Activated T-helper 1 cell treated with anti-CD3 and anti-CD28 coated beads, Interleukin-12 subunit alpha, Interleukin-12 subunit beta, Interleukin-2, Interleukin-4 antibody, amounts not matched to agents 30 ng/mL and 10 ng/mL and 1 ng/mL, durations not matched to agents 14 hours and 24 hours and 36 hours (primary cell): ENCODE measurements at regions of chr1 and their contacts with region 1.

Region 1: DNA sequence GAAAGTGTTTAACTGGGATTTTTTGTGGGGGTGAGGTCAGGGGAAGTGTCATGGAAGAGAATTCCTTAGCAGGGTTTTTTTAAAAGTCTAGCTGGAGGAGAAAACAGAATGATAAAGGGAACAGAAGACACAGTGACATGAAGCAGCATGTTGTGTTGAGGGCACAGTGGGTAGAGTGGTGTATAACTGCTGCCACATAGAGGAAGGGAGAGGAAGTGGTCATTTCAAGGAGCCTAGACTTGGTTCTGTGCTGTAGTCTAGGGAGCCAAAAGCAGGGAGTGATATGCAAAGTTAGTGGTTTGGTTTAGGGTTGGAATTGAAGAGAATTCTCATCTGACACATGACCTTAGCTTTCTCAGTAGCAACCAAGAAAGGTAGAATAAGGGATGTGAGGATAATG is 10.2 kb downstream of the EEIG2 start:
- DNase-seq: no peak
- H3K4me3 Mint-ChIP-seq: no peak overlapping the region
- H3K27ac Mint-ChIP-seq: no peak overlapping the region
- H3K4me1 Mint-ChIP-seq: peaks cover under 1% of the 10 kb centered on the region
- H3K27me3 Mint-ChIP-seq: no peaks in the 10 kb centered on the region

Region 2: DNA sequence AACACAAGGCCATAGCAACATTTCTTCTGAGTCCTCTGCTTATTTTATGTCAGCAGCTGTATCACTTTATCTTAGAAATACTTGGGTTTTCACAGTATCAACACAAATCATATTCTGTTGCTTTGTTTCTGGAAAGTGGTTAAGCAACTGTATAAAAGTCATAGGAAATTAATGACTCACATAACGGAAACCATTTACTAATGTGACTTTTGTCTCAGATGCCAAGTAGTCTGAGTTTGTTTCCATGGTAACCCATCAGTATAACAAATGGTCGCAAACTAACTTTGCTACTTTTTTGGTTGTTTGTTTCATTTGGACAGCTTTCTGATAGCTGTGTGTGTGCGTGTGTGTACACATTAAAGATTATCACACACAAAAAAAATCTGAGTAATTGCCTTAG is 20.8 kb after region 1 on chr1:
- intact Hi-C with region 1: loop called (anchors 2 kb)
- DNase-seq: no peak
- H3K4me3 Mint-ChIP-seq: no peak overlapping the region
- H3K27ac Mint-ChIP-seq: peak overlapping the region; percentile 75
- H3K4me1 Mint-ChIP-seq: peaks cover 49% of the 10 kb centered on the region
- H3K27me3 Mint-ChIP-seq: peaks cover 2% of the 10 kb centered on the region

Region 3: DNA sequence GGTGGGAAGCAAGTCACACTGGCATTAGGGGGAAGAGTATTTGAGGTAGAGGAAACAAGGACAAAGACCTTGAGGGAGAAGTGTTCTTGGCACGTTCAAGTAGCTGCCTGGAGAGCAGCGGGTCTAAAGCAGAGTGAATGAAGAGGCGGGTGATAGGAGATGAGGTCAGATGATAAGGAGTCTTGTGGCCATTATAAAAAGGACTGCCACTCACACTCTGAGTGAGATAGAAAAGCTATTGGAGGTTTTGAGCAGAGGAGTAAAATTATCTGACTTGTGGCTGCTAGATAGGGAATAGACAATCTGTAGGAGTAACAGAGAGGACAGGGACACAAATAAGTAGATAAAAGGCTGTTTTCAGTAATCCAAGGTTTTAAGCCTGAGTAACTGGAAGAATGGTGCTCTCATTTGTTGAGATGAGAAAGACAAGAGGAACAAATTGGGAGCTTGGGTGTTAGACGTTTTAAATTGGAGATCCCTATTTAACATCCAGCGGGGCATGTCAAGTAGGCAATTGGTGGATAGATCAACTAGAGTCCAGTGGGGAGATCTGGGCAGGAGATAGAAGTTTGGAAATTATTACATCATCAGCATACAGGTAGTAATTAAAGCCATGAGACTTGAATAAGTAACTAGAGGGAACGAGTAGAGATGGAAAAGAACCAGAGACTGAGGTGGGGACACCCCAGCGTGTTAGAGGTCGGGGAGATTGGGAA is 47.0 kb after region 1 on chr1:
- intact Hi-C with region 1: no loop called
- DNase-seq: no peak
- H3K4me3 Mint-ChIP-seq: no peak overlapping the region
- H3K27ac Mint-ChIP-seq: no peak overlapping the region
- H3K4me1 Mint-ChIP-seq: no peaks in the 10 kb centered on the region
- H3K27me3 Mint-ChIP-seq: no peaks in the 10 kb centered on the region